B cell (primary cell): ENCODE measurements at regions of chr14 and their contacts with region 1.

Region 1: DNA sequence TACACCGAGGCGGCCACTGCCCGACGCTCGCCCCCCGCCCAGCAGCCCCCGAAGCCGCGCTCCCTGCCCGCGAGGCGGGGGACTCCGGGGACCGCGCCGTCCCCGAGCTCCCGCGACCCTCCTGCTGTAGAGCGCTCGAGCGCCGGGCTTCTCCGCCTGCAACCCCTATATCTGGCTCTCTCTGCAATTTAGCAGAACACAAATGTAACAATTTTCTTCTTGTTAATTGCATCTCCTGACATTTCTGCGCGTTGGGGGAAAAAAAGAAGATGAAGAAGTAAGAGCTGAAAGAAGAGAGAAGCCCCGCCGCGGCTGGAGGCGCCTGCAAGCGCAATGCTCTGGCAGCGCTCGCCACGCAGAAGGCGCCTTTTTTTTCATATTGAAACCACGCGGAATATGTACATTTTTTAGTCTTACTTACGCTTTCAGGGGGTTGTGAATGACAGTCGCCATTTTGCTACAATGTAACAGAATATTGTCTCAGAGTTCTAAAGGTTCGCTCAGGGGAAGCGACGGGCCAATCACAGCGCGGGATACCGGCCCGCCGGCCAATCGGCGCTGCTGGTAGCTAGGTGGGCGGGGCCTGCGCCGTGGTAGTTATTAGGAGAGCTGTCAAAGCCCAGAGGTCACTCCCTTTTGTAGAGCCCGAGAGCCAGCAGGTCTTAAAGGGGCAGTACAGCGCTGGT is at the start of gene DPF3:
- DNase-seq: peak; percentile 94
- ATAC-seq: peak; percentile 98
- H3K4me3 ChIP-seq: peak within 1 kb of the TSS; percentile 84 to 94 (median 89)
- H3K4me3 Mint-ChIP-seq: peak within 1 kb of the TSS; percentile 92
- H3K27ac ChIP-seq: peak within 1 kb of the TSS in 1 of 2 donors; percentile 38
- H3K27ac Mint-ChIP-seq: peak within 1 kb of the TSS; percentile 70
- H3K4me1 ChIP-seq: peaks cover 17 to 25% of the 10 kb centered on the region in 2 donors
- H3K4me1 Mint-ChIP-seq: peaks cover 33% of the 10 kb centered on the region
- H3K27me3 ChIP-seq: peaks cover 0 to 18% (median 5%) of the 10 kb centered on the region in 4 experiments
- H3K27me3 Mint-ChIP-seq: peaks cover 6% of the 10 kb centered on the region
- CTCF ChIP-seq: no peak
- total RNA-seq, gene DPF3: 3.4 and 3.7 TPM in 2 replicates

Region 2: DNA sequence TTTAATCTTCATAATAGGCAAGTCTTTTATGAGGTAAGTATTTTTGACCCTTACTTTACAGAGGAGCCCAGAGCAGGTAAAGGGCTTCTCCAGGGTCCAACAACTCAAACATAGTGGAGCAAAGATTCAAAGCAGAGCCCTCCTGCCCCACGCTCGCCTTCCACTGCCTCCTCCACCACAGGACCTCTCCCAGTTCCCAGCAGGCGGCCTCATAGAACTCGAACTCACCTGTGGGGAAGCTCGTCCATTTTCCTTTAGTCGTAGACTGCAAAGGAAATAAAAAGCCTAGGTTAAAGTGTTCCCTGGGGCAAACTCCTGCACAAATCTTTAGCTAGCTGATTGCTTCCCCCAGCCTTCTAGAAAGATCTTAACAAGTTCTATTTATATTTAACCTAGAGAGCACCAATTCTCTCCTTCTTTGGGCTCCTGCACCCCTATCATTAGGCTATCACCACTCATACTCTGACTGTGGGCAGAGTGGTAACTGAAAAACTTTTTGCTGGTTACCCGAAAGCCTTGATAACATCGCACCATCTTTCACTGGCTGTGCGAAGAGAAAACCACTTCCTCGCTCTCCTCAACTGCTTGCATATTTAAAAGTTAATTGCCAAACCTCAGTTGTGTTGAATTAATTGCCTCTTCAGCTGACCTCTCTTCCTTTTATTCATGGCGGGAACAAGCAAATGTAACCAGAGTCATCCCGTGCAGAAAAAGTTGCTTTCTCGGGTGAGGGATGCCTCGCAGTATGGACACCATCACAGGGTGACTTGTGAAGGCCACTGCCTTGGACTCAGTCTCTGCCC is 299.5 kb before region 1 on chr14:
- CTCF ChIA-PET with region 1: no interaction called
- POLR2A ChIA-PET with region 1: no interaction called
- intact Hi-C with region 1: loop called (anchors 10 kb)
- DNase-seq: no peak
- ATAC-seq: no peak
- H3K4me3 ChIP-seq: no peak overlapping the region
- H3K4me3 Mint-ChIP-seq: peak overlapping the region; percentile 23
- H3K27ac ChIP-seq: no peak overlapping the region
- H3K27ac Mint-ChIP-seq: no peak overlapping the region
- H3K4me1 ChIP-seq: peaks cover 50 to 55% of the 10 kb centered on the region in 2 donors
- H3K4me1 Mint-ChIP-seq: peaks cover 70% of the 10 kb centered on the region
- H3K27me3 ChIP-seq: no peaks in the 10 kb centered on the region
- H3K27me3 Mint-ChIP-seq: no peaks in the 10 kb centered on the region
- CTCF ChIP-seq: no peak

Region 3: DNA sequence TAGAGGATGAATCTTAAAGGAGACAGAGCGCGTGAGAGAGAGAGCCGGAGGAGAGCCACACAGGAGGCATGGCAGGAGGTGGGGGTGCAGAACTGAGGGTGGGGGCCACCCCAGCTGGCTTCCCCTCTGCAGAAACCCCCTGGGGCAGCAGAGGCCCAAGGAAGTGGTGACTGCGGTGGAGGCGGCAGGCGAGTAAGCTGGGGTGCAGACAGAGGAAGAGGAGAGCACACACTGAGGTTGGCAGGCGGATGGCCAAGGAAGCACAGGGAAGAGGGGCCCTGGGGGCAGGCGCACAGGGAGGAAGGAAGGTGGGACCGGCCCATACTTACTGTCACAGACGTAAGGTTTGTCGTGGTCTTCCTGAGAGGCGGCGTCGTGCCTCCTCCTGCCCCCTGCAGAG is 179.7 kb before region 1 on chr14:
- CTCF ChIA-PET with region 1: interaction called, 3 read pairs
- POLR2A ChIA-PET with region 1: no interaction called
- intact Hi-C with region 1: loop called (anchors 5 kb)
- DNase-seq: peak; percentile 81
- ATAC-seq: peak; percentile 89
- H3K4me3 ChIP-seq: peak overlapping the region in 4 of 5 experiments; percentile 9 to 44 (median 26)
- H3K4me3 Mint-ChIP-seq: peak overlapping the region; percentile 77
- H3K27ac ChIP-seq: peak overlapping the region; percentile 26 to 48
- H3K27ac Mint-ChIP-seq: peak overlapping the region; percentile 90
- H3K4me1 ChIP-seq: peaks cover 48 to 50% of the 10 kb centered on the region in 2 donors
- H3K4me1 Mint-ChIP-seq: peaks cover 54% of the 10 kb centered on the region
- H3K27me3 ChIP-seq: no peaks in the 10 kb centered on the region
- H3K27me3 Mint-ChIP-seq: no peaks in the 10 kb centered on the region
- CTCF ChIP-seq: no peak

Region 4: GRCh38 chr14:72850360-72850759 is 43.4 kb before region 1 on chr14:
- CTCF ChIA-PET with region 1: no interaction called
- POLR2A ChIA-PET with region 1: no interaction called
- intact Hi-C with region 1: no loop called
- DNase-seq: no peak
- ATAC-seq: no peak
- H3K4me3 ChIP-seq: no peak overlapping the region
- H3K4me3 Mint-ChIP-seq: no peak overlapping the region
- H3K27ac ChIP-seq: no peak overlapping the region
- H3K27ac Mint-ChIP-seq: no peak overlapping the region
- H3K4me1 ChIP-seq: no peaks in the 10 kb centered on the region
- H3K4me1 Mint-ChIP-seq: peaks cover 15% of the 10 kb centered on the region
- H3K27me3 ChIP-seq: no peaks in the 10 kb centered on the region
- H3K27me3 Mint-ChIP-seq: no peaks in the 10 kb centered on the region
- CTCF ChIP-seq: no peak

Region 5: GRCh38 chr14:72904840-72905561 is 11.2 kb after region 1 on chr14:
- CTCF ChIA-PET with region 1: interaction called, 68 read pairs
- POLR2A ChIA-PET with region 1: no interaction called
- intact Hi-C with region 1: loop called (anchors 1 kb)
- DNase-seq: peak; percentile 83
- ATAC-seq: peak; percentile 66
- H3K4me3 ChIP-seq: no peak overlapping the region
- H3K4me3 Mint-ChIP-seq: no peak overlapping the region
- H3K27ac ChIP-seq: no peak overlapping the region
- H3K27ac Mint-ChIP-seq: peak overlapping the region; percentile 4
- H3K4me1 ChIP-seq: peaks cover 7 to 22% of the 10 kb centered on the region in 2 donors
- H3K4me1 Mint-ChIP-seq: peaks cover 13% of the 10 kb centered on the region
- H3K27me3 ChIP-seq: no peaks in the 10 kb centered on the region
- H3K27me3 Mint-ChIP-seq: no peaks in the 10 kb centered on the region
- CTCF ChIP-seq: peak; percentile 97

Region 6: DNA sequence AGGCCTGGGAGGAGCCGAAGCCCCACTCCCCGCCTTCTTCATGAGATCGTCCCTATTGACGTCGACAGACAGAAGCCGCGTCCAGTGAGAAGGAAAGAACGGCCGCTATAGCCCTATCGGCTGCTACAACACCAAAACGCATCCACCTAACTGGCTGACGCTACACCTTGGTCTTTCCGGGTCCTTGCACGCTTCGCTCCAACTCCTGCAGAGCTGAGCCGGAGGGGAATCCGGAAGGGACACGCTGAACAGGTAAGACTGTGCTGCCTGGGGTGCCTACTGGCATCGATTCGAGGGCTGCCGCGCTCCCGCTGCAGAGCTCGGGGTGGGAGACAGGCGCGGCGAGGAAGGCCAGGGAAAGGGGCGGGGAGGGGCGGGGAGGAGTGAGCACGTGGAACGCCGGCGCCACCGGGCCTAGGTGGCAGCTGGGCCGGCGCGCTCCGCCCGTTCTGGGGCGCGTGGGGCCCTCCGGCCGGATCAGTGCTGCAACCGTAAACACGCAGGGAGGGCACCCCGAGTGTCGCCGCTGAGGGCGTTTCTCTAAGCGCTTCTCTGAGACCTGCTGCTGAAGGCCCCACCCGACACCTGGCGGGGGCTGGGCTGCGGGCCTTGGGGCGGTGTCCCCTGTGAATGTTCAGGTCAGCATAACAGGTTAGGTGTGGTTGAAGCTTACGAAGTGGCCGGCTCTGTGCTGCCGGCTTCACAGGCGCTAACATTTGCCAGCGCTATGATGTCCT is 32.7 kb after region 1 on chr14 and contains the start of gene DCAF4:
- CTCF ChIA-PET with region 1: interaction called, 4 read pairs
- POLR2A ChIA-PET with region 1: no interaction called
- intact Hi-C with region 1: loop called (anchors 1 kb)
- DNase-seq: peak; percentile 97
- ATAC-seq: peak; percentile 91
- H3K4me3 ChIP-seq: peak within 1 kb of the TSS; percentile 55 to 87 (median 70)
- H3K4me3 Mint-ChIP-seq: peak within 1 kb of the TSS; percentile 99
- H3K27ac ChIP-seq: peak within 1 kb of the TSS; percentile 66 to 89
- H3K27ac Mint-ChIP-seq: peak within 1 kb of the TSS; percentile 95
- H3K4me1 ChIP-seq: peaks cover 10 to 23% of the 10 kb centered on the region in 2 donors
- H3K4me1 Mint-ChIP-seq: peaks cover 15% of the 10 kb centered on the region
- H3K27me3 ChIP-seq: no peaks in the 10 kb centered on the region
- H3K27me3 Mint-ChIP-seq: peaks cover 7% of the 10 kb centered on the region
- CTCF ChIP-seq: no peak
- total RNA-seq, gene DCAF4: 35.3 and 36.2 TPM in 2 replicates

Region 7: DNA sequence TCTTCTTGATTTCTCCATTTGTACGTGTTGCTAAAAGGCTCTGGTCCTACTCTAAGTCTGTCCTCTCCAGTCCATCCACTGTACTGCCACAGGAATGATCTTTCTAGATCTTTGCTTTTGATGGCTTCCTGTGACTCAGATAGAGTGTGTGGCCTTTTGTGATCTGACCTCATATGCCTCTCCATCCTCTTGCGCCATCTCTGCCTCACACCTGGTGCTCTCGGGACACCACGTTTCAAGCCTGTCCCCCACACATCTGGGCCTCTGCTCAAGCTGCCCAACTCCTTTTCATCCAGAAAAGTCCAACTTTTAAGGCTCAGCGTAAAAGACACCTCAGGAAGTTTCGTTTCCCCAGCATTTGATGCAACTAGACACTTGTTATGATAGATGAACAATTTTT is 71.5 kb after region 1 on chr14:
- CTCF ChIA-PET with region 1: no interaction called
- POLR2A ChIA-PET with region 1: no interaction called
- intact Hi-C with region 1: no loop called
- DNase-seq: no peak
- ATAC-seq: no peak
- H3K4me3 ChIP-seq: no peak overlapping the region
- H3K4me3 Mint-ChIP-seq: no peak overlapping the region
- H3K27ac ChIP-seq: no peak overlapping the region
- H3K27ac Mint-ChIP-seq: no peak overlapping the region
- H3K4me1 ChIP-seq: no peaks in the 10 kb centered on the region
- H3K4me1 Mint-ChIP-seq: no peaks in the 10 kb centered on the region
- H3K27me3 ChIP-seq: no peaks in the 10 kb centered on the region
- H3K27me3 Mint-ChIP-seq: no peaks in the 10 kb centered on the region
- CTCF ChIP-seq: no peak

Region 8: DNA sequence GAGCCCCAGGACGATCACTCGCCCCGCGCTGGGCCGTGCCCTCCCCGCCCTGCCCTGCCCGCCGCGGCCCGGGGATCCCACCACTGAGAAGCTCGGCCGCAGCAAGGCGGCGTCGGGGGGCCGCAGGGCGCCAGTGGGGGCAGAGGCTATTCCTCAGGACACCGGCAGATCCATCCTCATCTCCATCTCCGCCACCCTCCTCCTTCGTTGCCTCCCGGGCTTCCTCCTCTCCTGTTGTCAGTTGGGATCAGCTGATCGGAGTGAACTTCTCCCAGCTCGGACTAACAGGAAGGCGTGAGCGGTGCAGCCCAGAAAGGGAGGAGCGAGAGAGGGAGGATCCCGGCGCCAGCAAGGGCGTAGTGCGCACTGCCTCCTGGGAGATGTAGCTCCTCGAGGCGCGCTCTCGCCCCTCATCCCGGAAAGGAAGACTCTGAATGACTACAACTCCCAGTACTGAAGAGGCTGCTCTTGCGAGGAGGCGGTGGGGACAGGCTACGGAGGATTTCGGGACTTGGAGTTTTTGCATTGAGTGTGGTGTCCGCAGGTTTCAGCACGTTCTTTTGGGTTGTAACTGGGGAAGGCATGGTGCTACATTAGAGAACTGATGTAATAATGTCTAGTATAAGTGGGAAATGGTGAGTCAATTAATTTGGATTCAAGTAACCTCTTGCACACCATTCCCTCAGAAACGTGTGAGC is 133.2 kb after region 1 on chr14 and contains the start of gene ZFYVE1:
- CTCF ChIA-PET with region 1: no interaction called
- POLR2A ChIA-PET with region 1: no interaction called
- intact Hi-C with region 1: loop called (anchors 1 kb)
- DNase-seq: peak; percentile 92
- ATAC-seq: peak; percentile 99
- H3K4me3 ChIP-seq: peak within 1 kb of the TSS; percentile 69 to 97 (median 95)
- H3K4me3 Mint-ChIP-seq: peak within 1 kb of the TSS; percentile 96
- H3K27ac ChIP-seq: peak within 1 kb of the TSS in 1 of 2 donors; percentile 71
- H3K27ac Mint-ChIP-seq: peak within 1 kb of the TSS; percentile 94
- H3K4me1 ChIP-seq: peaks cover 16 to 18% of the 10 kb centered on the region in 2 donors
- H3K4me1 Mint-ChIP-seq: peaks cover 38% of the 10 kb centered on the region
- H3K27me3 ChIP-seq: no peaks in the 10 kb centered on the region
- H3K27me3 Mint-ChIP-seq: no peaks in the 10 kb centered on the region
- CTCF ChIP-seq: no peak
- total RNA-seq, gene ZFYVE1: 21.2 and 22.3 TPM in 2 replicates